ENCODE measurements at regions of chr17 and their contacts with region 1.

Region 1: GRCh38 chr17:59311130-59311920 is 20.1 kb upstream of the YPEL2 start:
- DNase-seq: peak; percentile 48
- ATAC-seq: peak; percentile 99
- H3K4me3 Mint-ChIP-seq: no peak overlapping the region
- H3K27ac Mint-ChIP-seq: no peak overlapping the region
- H3K4me1 Mint-ChIP-seq: peaks cover 2% of the 10 kb centered on the region
- H3K27me3 Mint-ChIP-seq: no peaks in the 10 kb centered on the region

Region 2: GRCh38 chr17:59300682-59301321 is 10.5 kb before region 1 on chr17:
- CTCF ChIA-PET with region 1: interaction called, 13 read pairs
- POLR2A ChIA-PET with region 1: no interaction called
- intact Hi-C with region 1: no loop called
- DNase-seq: no peak
- ATAC-seq: no peak
- H3K4me3 Mint-ChIP-seq: no peak overlapping the region
- H3K27ac Mint-ChIP-seq: no peak overlapping the region
- H3K4me1 Mint-ChIP-seq: no peaks in the 10 kb centered on the region
- H3K27me3 Mint-ChIP-seq: peaks cover 3% of the 10 kb centered on the region

Region 3: GRCh38 chr17:59440784-59441441 is 129.6 kb after region 1 on chr17:
- CTCF ChIA-PET with region 1: interaction called, 191 read pairs
- POLR2A ChIA-PET with region 1: interaction called, 5 read pairs
- intact Hi-C with region 1: loop called (anchors 1 kb)
- DNase-seq: peak; percentile 94
- ATAC-seq: peak; percentile 95
- H3K4me3 Mint-ChIP-seq: peak overlapping the region; percentile 57
- H3K27ac Mint-ChIP-seq: peak overlapping the region; percentile 90
- H3K4me1 Mint-ChIP-seq: peaks cover 53% of the 10 kb centered on the region
- H3K27me3 Mint-ChIP-seq: peaks cover 3% of the 10 kb centered on the region

Region 4: GRCh38 chr17:59565171-59565969 is 254.0 kb after region 1 on chr17 and contains the start of gene DHX40:
- CTCF ChIA-PET with region 1: interaction called, 4 read pairs
- POLR2A ChIA-PET with region 1: no interaction called
- intact Hi-C with region 1: loop called in 1 of 2 experiments (anchors 1 kb)
- DNase-seq: peak; percentile 98
- ATAC-seq: peak; percentile 89
- H3K4me3 Mint-ChIP-seq: peak within 1 kb of the TSS; percentile 99
- H3K27ac Mint-ChIP-seq: peak within 1 kb of the TSS; percentile 99
- H3K4me1 Mint-ChIP-seq: peaks cover 20% of the 10 kb centered on the region
- H3K27me3 Mint-ChIP-seq: no peaks in the 10 kb centered on the region
- total RNA-seq, gene DHX40: 22.9 to 24.1 TPM

Measured in activated CD4-positive, alpha-beta T cell treated with anti-CD3 and anti-CD28 coated beads for 36 hours (primary cell).